Panc1 (cell line): ENCODE measurements at regions of chr11 and their contacts with region 1.

Region 1: GRCh38 chr11:120303004-120303637 is 22.0 kb upstream of the TLCD5 start:
- DNase-seq: peak; percentile 67
- ATAC-seq: peak; percentile 85
- H3K4me3 ChIP-seq: no peak overlapping the region
- H3K27ac ChIP-seq: no peak overlapping the region
- H3K4me1 ChIP-seq: no peaks in the 10 kb centered on the region
- H3K27me3 ChIP-seq: no peaks in the 10 kb centered on the region
- CTCF ChIP-seq: peak; percentile 99

Region 2: DNA sequence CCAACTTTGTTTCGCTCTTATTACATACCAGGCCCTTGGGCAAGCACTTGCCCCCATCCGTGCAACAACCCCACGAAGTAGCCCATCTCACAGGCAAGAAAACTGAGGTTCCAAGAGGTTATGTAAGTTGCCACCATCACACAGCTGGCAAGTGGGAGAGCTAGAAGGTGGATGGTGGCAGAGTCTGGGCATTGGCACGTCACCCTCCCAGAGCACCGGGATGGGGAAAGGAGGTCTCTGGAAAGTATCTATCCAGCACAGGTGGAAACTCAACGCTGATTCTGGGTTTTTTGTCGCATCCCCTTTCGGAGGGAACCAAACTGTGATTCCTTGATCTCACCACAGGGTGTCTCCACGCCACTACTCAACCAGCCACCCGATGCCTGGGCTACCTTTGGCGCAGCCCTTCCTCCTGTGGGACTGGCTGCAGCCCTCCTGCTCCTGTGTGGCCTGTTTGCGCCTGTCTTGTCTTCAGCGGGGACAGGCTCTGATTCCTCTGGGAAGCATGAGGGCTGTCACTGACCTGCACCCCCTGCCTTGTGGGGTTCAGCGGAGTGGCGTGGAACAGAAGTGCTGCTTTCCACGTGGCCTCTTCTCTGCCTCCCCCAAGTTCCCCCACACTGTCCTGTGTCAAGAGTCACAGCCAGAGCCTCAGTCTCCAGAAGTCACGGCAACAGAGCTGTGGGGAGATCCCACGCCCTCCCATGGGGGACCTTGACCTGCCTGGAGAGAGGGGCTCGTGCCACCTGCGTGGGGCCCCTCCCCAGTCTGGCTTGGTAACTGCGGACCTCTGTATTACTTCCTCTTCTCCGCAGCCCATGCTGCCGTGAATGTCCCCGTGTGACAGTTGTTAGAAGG is 130.8 kb before region 1 on chr11:
- CTCF ChIA-PET with region 1: interaction called, 4 read pairs
- POLR2A ChIA-PET with region 1: interaction called, 3 read pairs
- in situ Hi-C with region 1: no loop called
- intact Hi-C with region 1: loop called (anchors 2 kb)
- DNase-seq: peak; percentile 30
- ATAC-seq: peak; percentile 70
- H3K4me3 ChIP-seq: no peak overlapping the region
- H3K27ac ChIP-seq: no peak overlapping the region
- H3K4me1 ChIP-seq: 0 out of 2 replicates have a peak, but pooled peaks cover 4% of the 10 kb centered on the region
- H3K27me3 ChIP-seq: peaks cover 45% of the 10 kb centered on the region
- CTCF ChIP-seq: peak; percentile 89

Region 3: GRCh38 chr11:120216426-120217102 is 86.6 kb before region 1 on chr11:
- CTCF ChIA-PET with region 1: no interaction called
- POLR2A ChIA-PET with region 1: no interaction called
- in situ Hi-C with region 1: no loop called
- intact Hi-C with region 1: no loop called
- DNase-seq: no peak
- ATAC-seq: no peak
- H3K4me3 ChIP-seq: no peak overlapping the region
- H3K27ac ChIP-seq: no peak overlapping the region
- H3K4me1 ChIP-seq: peaks cover 6% of the 10 kb centered on the region; the same call in 1 of the 2 replicates
- H3K27me3 ChIP-seq: no peaks in the 10 kb centered on the region
- CTCF ChIP-seq: no peak

Region 4: GRCh38 chr11:120235024-120235861 is 67.9 kb before region 1 on chr11:
- CTCF ChIA-PET with region 1: interaction called, 52 read pairs
- POLR2A ChIA-PET with region 1: interaction called, 3 read pairs
- in situ Hi-C with region 1: no loop called
- intact Hi-C with region 1: loop called (anchors 1 kb)
- DNase-seq: peak; percentile 47
- ATAC-seq: peak; percentile 87
- H3K4me3 ChIP-seq: no peak overlapping the region
- H3K27ac ChIP-seq: no peak overlapping the region
- H3K4me1 ChIP-seq: peaks cover 4% of the 10 kb centered on the region; the same call in 1 of the 2 replicates
- H3K27me3 ChIP-seq: peaks cover 24% of the 10 kb centered on the region
- CTCF ChIP-seq: peak; percentile 97